ENCODE measurements at regions of chr5 and their contacts with region 1.

Region 1: DNA sequence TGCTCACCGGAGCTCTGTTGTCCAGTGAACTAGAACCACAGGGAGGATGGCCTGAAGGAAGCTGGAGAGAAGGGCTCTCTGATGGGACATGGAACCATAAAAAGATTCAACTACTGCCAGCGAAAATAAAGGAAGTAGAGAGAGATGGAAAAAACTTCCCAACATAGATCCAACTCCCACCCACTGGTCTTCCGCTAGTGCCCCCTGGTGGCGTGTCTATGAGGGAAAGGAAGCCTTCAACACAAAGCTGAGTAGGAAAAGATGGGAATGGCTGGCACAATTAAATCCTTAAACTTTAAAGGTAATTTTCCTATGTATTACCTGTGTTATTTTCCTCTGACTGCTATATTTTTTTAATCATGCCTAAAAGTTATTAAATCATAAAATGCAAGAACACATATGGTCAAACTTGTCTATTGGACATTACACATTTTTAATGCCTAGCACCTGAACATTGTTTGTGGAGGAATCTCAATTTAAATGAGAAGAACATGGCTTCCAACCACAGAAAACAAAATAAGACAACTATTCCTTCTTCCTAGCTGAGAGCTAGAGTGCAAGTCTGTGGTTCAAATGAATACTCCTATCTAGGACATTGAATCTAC is 51.5 kb downstream of the CEP120 start:
- DNase-seq: peak; percentile 72
- H3K4me3 Mint-ChIP-seq: no peak overlapping the region
- H3K27ac Mint-ChIP-seq: no peak overlapping the region
- H3K4me1 Mint-ChIP-seq: no peaks in the 10 kb centered on the region
- H3K27me3 Mint-ChIP-seq: no peaks in the 10 kb centered on the region
- CTCF ChIP-seq: peak; percentile 49

Region 2: DNA sequence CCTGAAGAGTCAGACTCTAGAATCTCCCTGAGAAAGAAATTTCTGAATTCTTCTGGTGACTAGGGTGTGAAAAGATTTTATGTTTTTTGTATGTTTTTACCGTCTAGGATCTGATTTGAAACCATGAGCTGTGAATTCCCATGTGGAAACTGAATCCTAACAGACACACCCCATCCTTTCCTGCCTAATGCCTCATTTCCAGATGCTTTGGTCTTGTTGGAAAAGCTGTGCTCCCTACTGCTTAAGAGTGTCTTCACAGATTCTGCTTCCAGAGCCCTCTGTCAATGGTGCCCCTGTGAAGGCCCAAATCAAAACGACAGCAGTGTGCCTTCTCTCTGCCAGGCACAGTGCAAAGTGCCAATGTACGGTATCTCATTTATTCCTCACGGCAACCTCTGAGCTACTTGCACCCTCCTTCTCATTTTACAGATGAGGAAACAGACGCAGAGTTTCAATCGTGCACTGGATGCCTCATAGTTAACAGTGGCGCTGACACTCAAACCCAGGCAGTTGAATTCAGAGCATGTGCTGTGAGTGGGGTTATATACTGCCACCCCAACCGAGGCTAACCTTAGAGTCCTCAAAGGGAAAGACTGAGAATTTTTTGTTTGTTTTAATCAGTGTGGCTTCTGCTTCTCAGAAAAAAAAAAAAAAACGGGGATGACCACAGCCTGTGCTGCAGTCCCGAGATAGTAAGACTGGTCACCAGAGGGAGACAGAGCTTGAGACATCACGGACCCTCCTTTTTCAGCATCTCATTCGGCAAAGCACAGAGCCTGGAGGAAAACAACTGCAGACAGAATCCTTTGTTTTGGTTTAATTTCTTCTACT is 871.2 kb before region 1 on chr5:
- CTCF ChIA-PET with region 1: interaction called, 4 read pairs
- POLR2A ChIA-PET with region 1: interaction called, 3 read pairs
- intact Hi-C with region 1: loop called (anchors 5 kb)
- DNase-seq: peak; percentile 76
- H3K4me3 Mint-ChIP-seq: peak overlapping the region; percentile 5
- H3K27ac Mint-ChIP-seq: peak overlapping the region; percentile 71
- H3K4me1 Mint-ChIP-seq: peaks cover 23% of the 10 kb centered on the region
- H3K27me3 Mint-ChIP-seq: no peaks in the 10 kb centered on the region
- CTCF ChIP-seq: peak; percentile 53

Region 3: DNA sequence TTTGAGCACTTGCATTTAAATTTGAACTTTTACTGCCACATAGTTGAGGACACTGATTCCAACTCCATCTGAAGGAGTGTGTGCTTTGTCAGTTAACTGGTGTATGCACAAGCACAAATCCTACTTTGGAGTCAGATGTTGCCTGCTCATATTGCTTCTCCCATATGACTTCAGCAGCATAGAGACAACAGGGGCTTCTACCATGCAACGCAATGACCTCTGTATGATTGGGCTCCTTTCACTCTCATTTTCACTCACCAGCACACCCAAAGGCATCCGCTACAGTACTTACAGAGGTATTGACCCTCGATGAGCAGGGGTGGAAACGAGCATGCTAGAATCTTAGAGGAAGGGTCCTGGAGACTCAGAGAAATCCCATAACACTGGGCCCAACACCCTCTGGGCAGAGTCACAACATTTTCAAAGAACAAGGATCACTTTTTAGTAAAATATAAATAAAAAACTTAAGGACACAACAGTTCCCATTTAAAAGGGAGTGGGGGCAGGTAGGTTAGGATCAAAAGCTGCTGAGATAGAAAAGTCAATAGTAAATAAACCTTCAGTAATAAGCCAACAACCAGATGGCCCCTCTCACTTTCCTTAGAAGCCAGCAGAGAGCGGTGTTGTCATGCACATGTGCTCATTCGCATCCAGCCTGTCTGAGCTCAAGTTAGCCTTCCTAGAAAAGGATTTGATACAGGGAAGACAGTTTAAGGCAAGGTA is 855.8 kb before region 1 on chr5:
- CTCF ChIA-PET with region 1: interaction called, 12 read pairs
- POLR2A ChIA-PET with region 1: no interaction called
- intact Hi-C with region 1: loop called (anchors 1 kb)
- DNase-seq: peak; percentile 89
- H3K4me3 Mint-ChIP-seq: no peak overlapping the region
- H3K27ac Mint-ChIP-seq: no peak overlapping the region
- H3K4me1 Mint-ChIP-seq: no peaks in the 10 kb centered on the region
- H3K27me3 Mint-ChIP-seq: no peaks in the 10 kb centered on the region
- CTCF ChIP-seq: peak; percentile 94

Region 4: DNA sequence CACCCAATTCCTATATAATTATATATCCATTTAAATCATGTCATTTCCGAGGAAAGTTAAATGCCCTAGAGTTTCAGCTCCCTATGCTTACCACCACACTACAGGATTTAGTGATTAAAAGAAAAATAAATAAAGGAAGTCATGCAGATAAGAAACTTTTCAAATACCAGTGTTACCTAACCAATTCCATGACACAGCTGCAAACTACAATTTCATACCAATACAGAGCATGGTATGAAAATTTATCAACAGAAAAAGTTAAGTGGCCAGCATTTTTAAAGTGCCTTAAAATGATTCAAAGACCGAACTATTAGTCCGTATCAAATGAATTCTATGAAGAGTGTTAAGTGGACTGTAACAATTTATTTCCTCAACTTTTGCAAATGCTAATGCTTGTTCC is 15.6 kb after region 1 on chr5:
- CTCF ChIA-PET with region 1: interaction called, 12 read pairs
- POLR2A ChIA-PET with region 1: interaction called, 3 read pairs
- intact Hi-C with region 1: no loop called
- DNase-seq: no peak
- H3K4me3 Mint-ChIP-seq: no peak overlapping the region
- H3K27ac Mint-ChIP-seq: no peak overlapping the region
- H3K4me1 Mint-ChIP-seq: no peaks in the 10 kb centered on the region
- H3K27me3 Mint-ChIP-seq: no peaks in the 10 kb centered on the region
- CTCF ChIP-seq: no peak

Region 5: DNA sequence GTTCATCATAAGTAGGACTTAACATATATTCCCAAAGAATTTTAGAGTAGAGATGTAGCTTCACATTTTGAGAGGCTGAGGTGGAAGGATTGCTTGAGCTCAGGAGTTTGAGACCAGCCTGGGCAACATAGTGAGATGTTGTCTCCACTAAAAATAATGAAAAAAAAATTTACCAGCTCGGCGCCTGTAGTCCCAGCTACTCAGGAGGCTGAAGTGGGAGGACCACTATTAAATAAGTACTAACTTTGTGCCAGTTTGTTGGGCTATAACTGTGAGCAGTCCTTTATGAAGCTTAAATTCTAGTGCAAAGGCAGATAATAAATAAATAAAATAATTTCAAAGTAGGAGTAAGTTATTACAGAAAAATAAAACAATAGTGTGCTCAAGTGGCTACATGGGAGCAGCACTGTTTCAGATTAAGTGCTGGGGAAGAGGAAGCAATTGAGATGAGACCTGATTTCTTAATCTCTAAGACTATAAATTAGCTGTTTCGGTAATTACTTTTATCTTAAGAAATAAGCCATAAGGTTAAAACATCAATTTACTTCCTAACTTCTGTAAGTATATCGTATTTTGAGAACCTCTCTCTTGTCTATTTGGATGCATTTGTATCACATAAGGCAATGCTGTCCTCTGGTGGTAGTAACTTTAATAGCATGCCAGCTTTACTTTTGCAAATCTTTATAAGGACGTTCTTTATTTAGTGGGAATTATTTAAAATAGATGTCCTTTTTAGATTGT is 239.2 kb after region 1 on chr5:
- CTCF ChIA-PET with region 1: interaction called, 12 read pairs
- POLR2A ChIA-PET with region 1: no interaction called
- intact Hi-C with region 1: loop called (anchors 1 kb)
- DNase-seq: peak; percentile 76
- H3K4me3 Mint-ChIP-seq: no peak overlapping the region
- H3K27ac Mint-ChIP-seq: no peak overlapping the region
- H3K4me1 Mint-ChIP-seq: no peaks in the 10 kb centered on the region
- H3K27me3 Mint-ChIP-seq: no peaks in the 10 kb centered on the region
- CTCF ChIP-seq: peak; percentile 96

Measured in MCF 10A (cell line).